Ascending aorta (tissue), 2 donors: ENCODE measurements at regions of chr3 and their contacts with region 1.

Region 1: DNA sequence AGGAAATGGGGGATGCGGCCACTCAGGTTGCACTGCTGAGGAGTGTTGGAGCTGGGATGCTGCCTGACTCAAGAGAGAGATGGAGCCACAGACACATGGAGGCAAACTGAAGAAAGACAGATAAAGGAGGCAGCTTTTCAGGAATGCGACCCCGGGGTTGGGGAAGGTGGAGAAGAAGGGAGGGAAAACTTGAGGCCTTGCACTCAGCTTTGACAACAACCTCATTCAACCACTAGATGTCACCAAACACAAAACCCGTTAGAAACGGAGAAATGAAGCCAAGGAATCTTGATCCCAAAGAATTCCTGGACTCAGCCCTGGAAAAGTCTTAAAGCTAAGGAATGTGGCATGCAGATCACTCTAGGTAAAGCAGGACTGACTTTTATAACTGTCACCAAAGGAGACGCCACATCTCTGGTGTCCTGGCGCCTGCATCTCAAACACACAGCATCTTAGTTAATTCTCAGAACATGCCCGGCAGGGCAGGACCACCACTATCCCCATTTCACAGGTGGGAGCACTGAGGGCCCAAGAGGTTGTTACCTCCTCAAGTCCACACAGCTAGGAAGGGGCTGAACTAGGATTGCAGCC is 59.6 kb upstream of the LMCD1 start:
- DNase-seq: no peak
- H3K4me3 ChIP-seq: no peak overlapping the region
- H3K27ac ChIP-seq: peak overlapping the region; percentile 75 to 88
- H3K4me1 ChIP-seq: peaks cover 6 to 33% of the 10 kb centered on the region in 2 donors
- H3K27me3 ChIP-seq: no peaks in the 10 kb centered on the region
- CTCF ChIP-seq: peak; percentile 62 to 77 (median 77)

Region 2: DNA sequence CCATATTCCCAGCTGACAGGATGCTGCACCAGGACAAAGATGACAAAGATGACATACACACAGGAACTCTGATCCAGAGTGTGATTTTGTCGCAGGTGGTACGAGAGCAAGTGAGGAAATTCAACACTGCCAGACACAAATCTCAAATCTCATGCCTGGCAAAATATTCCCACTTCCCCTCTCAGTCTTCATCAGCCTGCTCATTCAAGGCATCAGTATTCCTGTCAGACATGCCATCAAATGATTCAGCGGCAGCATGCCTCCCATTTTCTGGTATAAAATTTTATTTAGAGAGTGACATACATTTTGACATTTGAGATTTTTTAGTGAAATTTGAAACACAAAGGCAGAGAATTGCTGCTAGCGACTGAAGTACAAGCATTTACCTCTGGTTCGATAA is 168.6 kb before region 1 on chr3:
- intact Hi-C with region 1: no loop called
- DNase-seq: no peak
- H3K4me3 ChIP-seq: no peak overlapping the region
- H3K27ac ChIP-seq: no peak overlapping the region
- H3K4me1 ChIP-seq: no peaks in the 10 kb centered on the region
- H3K27me3 ChIP-seq: no peaks in the 10 kb centered on the region
- CTCF ChIP-seq: no peak

Region 3: GRCh38 chr3:8458711-8459110 is 16.6 kb after region 1 on chr3:
- intact Hi-C with region 1: loop called (anchors 1 kb)
- DNase-seq: peak; percentile 77 to 96
- H3K4me3 ChIP-seq: no peak overlapping the region
- H3K27ac ChIP-seq: peak overlapping the region; percentile 93 to 97
- H3K4me1 ChIP-seq: peaks cover 0 to 54% of the 10 kb centered on the region in 2 donors
- H3K27me3 ChIP-seq: no peaks in the 10 kb centered on the region
- CTCF ChIP-seq: no peak

Region 4: GRCh38 chr3:8555113-8555661 is 113.1 kb after region 1 on chr3:
- intact Hi-C with region 1: loop called (anchors 5 kb)
- DNase-seq: peak in 1 of 2 donors; percentile 76
- H3K4me3 ChIP-seq: peak overlapping the region in 1 of 2 donors; percentile 24
- H3K27ac ChIP-seq: peak overlapping the region; percentile 79 to 84
- H3K4me1 ChIP-seq: peaks cover 51 to 88% of the 10 kb centered on the region in 2 donors
- H3K27me3 ChIP-seq: no peaks in the 10 kb centered on the region
- CTCF ChIP-seq: no peak

Region 5: GRCh38 chr3:8622873-8623691 is 181.0 kb after region 1 on chr3:
- intact Hi-C with region 1: loop called (anchors 2 kb)
- DNase-seq: peak in 1 of 2 donors; percentile 78
- H3K4me3 ChIP-seq: no peak overlapping the region
- H3K27ac ChIP-seq: no peak overlapping the region
- H3K4me1 ChIP-seq: peaks cover 5 to 11% of the 10 kb centered on the region in 2 donors
- H3K27me3 ChIP-seq: no peaks in the 10 kb centered on the region
- CTCF ChIP-seq: peak; percentile 73 to 94 (median 82)

Region 6: DNA sequence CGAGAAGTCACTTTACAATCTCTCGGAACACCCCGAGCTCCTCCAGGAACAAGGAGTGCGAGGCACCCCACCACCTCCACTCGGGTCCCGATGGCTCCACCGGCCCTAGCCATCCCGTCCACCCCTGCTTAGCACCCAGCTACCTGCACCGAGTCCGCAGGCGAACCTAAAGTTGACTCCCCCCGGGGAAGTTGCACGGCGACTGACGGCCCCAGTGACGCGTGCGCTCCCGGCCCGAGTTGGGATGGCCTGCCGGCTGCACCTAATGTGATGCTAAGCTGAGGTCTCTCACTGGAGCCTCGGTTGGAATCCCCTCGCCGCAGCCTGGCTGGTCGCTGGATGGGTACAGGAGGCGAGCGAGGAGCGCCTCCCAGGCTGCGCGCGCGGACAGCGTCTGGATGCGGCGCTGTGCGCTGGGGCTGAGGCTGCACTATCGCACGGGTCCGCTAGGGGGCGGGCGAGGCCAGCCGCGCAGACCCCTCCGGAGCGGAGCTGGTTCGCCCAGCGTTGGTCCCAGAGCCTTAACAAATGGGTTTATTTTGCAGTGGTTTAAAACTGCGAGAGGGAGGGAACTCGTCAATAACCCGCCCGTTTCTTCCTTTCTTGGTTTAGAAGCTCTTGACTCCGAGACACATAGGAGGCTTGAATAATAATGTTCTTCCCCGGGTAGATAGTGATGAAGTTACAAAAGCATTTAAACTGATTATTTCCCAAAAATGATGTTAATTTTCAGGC is 327.2 kb after region 1 on chr3 and contains the start of gene OXTR:
- intact Hi-C with region 1: loop called (anchors 5 kb)
- DNase-seq: peak in 1 of 2 donors; percentile 67
- H3K4me3 ChIP-seq: peak within 1 kb of the TSS; percentile 37 to 68
- H3K27ac ChIP-seq: no peak within 1 kb of the TSS
- H3K4me1 ChIP-seq: peaks cover 0 to 17% of the 10 kb centered on the region in 2 donors
- H3K27me3 ChIP-seq: peaks cover 3% of the 10 kb centered on the region
- CTCF ChIP-seq: peak; percentile 90 to 100 (median 99)
- total RNA-seq, gene OXTR: 150 TPM